MCF 10A (cell line): ENCODE measurements at regions of chr16 and their contacts with region 1.

Region 1: GRCh38 chr16:58306327-58306726 is 11.5 kb upstream of the PRSS54 start:
- DNase-seq: peak; percentile 55
- H3K4me3 Mint-ChIP-seq: no peak overlapping the region
- H3K27ac Mint-ChIP-seq: no peak overlapping the region
- H3K4me1 Mint-ChIP-seq: no peaks in the 10 kb centered on the region
- H3K27me3 Mint-ChIP-seq: peaks cover 20% of the 10 kb centered on the region
- CTCF ChIP-seq: peak; percentile 45

Region 2: DNA sequence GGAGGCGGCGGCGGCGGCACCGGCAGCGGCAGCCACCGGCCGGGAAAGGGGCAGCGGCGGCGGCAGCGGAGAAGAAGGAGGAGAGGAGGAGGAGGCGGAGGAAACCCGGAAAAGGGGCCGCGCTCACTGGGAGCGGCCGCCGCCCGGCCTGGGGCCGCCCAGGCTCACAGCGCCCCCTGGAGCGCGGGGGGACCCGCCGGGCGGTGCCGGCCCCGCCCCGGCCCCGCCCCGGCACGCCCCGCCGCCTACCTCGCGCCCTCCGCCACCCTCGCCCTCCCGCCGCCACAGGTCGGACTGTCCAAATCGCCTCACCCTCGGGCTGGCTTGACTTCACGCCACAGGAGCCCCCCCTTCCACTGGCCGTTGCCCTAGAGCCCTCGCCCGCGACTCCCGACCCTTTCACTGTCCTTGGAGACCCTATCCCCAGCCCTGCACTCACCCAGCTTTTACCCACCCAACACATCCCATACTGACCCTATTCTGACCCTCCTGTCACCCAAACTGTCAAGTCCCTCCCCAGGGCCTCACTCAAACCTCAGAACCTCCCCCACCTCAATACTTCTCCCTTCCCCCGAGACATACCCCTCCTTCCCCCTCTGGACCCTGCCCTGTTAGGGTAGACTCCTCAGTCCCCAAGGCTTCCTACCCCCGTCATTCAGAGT is 108.2 kb before region 1 on chr16 and contains the start of gene CSNK2A2:
- CTCF ChIA-PET with region 1: interaction called, 4 read pairs
- POLR2A ChIA-PET with region 1: interaction called, 6 read pairs
- intact Hi-C with region 1: loop called (anchors 1 kb)
- DNase-seq: peak; percentile 76
- H3K4me3 Mint-ChIP-seq: peak within 1 kb of the TSS; percentile 86
- H3K27ac Mint-ChIP-seq: peak within 1 kb of the TSS; percentile 77
- H3K4me1 Mint-ChIP-seq: peaks cover 19% of the 10 kb centered on the region
- H3K27me3 Mint-ChIP-seq: no peaks in the 10 kb centered on the region
- CTCF ChIP-seq: peak; percentile 17
- total RNA-seq, gene CSNK2A2: 91.7 and 97.2 TPM in 2 replicates

Region 3: GRCh38 chr16:58222532-58223316 is 83.6 kb before region 1 on chr16:
- CTCF ChIA-PET with region 1: no interaction called
- POLR2A ChIA-PET with region 1: no interaction called
- intact Hi-C with region 1: no loop called
- DNase-seq: peak; percentile 45
- H3K4me3 Mint-ChIP-seq: no peak overlapping the region
- H3K27ac Mint-ChIP-seq: peak overlapping the region; percentile 6
- H3K4me1 Mint-ChIP-seq: peaks cover 7% of the 10 kb centered on the region
- H3K27me3 Mint-ChIP-seq: peaks cover 29% of the 10 kb centered on the region
- CTCF ChIP-seq: no peak

Region 4: GRCh38 chr16:58644805-58645484 is 338.6 kb after region 1 on chr16:
- CTCF ChIA-PET with region 1: no interaction called
- POLR2A ChIA-PET with region 1: no interaction called
- intact Hi-C with region 1: no loop called
- DNase-seq: peak; percentile 46
- H3K4me3 Mint-ChIP-seq: no peak overlapping the region
- H3K27ac Mint-ChIP-seq: no peak overlapping the region
- H3K4me1 Mint-ChIP-seq: no peaks in the 10 kb centered on the region
- H3K27me3 Mint-ChIP-seq: no peaks in the 10 kb centered on the region
- CTCF ChIP-seq: no peak

Region 5: DNA sequence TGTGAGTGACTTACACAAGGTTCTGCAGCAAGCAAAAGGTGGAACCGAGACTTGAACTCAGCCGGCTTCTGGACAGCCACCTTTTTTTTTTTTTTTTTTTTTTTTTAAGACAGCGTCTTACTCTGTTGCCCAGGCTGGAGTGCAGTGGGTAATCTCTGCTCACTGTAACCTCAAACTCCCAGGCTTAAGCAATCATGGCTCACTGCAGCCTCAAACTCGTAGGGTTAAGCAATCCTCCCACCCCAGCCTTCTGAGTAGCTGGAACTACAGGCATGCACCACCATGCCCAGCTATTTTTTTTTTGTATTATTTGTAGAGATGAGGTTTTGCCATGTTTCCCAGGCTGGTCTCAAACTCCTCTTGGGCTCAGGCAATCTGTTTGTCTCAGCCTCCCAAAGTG is 483.0 kb after region 1 on chr16:
- CTCF ChIA-PET with region 1: no interaction called
- POLR2A ChIA-PET with region 1: no interaction called
- intact Hi-C with region 1: no loop called
- DNase-seq: peak; percentile 16
- H3K4me3 Mint-ChIP-seq: no peak overlapping the region
- H3K27ac Mint-ChIP-seq: no peak overlapping the region
- H3K4me1 Mint-ChIP-seq: no peaks in the 10 kb centered on the region
- H3K27me3 Mint-ChIP-seq: peaks cover 7% of the 10 kb centered on the region
- CTCF ChIP-seq: no peak